ENCODE measurements at regions of chr4 and their contacts with region 1.

Region 1: GRCh38 chr4:88514557-88515511 is 8.7 kb downstream of the PYURF start:
- DNase-seq: no peak
- ATAC-seq: no peak
- H3K4me3 ChIP-seq: no peak overlapping the region
- H3K27ac ChIP-seq: no peak overlapping the region
- H3K4me1 ChIP-seq: no peaks in the 10 kb centered on the region
- H3K27me3 ChIP-seq: no peaks in the 10 kb centered on the region
- CTCF ChIP-seq: no peak

Region 2: GRCh38 chr4:88033309-88033708 is 481.5 kb before region 1 on chr4:
- CTCF ChIA-PET with region 1: interaction called, 7 read pairs
- POLR2A ChIA-PET with region 1: no interaction called
- in situ Hi-C with region 1: no loop called
- intact Hi-C with region 1: loop called (anchors 10 kb)
- DNase-seq: peak; percentile 18
- ATAC-seq: no peak
- H3K4me3 ChIP-seq: no peak overlapping the region
- H3K27ac ChIP-seq: no peak overlapping the region
- H3K4me1 ChIP-seq: no peaks in the 10 kb centered on the region
- H3K27me3 ChIP-seq: no peaks in the 10 kb centered on the region
- CTCF ChIP-seq: peak; percentile 70; the same call in 1 of the 2 replicates

Region 3: DNA sequence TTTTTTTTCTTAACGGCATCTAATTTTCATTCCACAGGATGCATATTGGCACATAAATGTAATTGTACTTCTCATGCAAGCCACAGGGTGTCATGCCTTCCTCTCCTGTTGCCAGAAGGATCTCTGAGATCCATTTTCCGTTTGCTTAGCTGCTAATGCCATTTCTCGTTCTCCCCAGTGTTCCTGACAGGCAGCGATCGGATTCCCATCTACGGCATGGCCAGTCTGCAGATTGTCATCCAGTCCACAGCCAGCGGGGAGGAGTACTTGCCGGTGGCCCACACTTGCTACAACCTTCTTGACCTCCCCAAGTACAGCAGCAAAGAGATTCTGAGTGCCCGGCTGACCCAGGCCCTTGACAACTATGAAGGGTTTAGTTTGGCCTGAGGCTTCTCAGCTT is 191.7 kb after region 1 on chr4:
- CTCF ChIA-PET with region 1: no interaction called
- POLR2A ChIA-PET with region 1: no interaction called
- in situ Hi-C with region 1: no loop called
- intact Hi-C with region 1: no loop called
- DNase-seq: no peak
- ATAC-seq: no peak; the same call in 1 of the 2 replicates
- H3K4me3 ChIP-seq: no peak overlapping the region
- H3K27ac ChIP-seq: no peak overlapping the region
- H3K4me1 ChIP-seq: no peaks in the 10 kb centered on the region
- H3K27me3 ChIP-seq: no peaks in the 10 kb centered on the region
- CTCF ChIP-seq: peak; percentile 56

Measured in Panc1 (cell line).